A549 (cell line): ENCODE measurements at regions of chr6 and their contacts with region 1.

Region 1: GRCh38 chr6:47309291-47310130 is at the start of gene TNFRSF21:
- DNase-seq: peak; percentile 79 to 88
- ATAC-seq: peak; percentile 96 to 97
- H3K4me3 ChIP-seq: peak within 1 kb of the TSS; percentile 96
- H3K27ac ChIP-seq: peak within 1 kb of the TSS; percentile 90 to 93
- H3K4me1 ChIP-seq: peaks cover 29% of the 10 kb centered on the region
- CTCF ChIP-seq: peak; percentile 72
- EP300 ChIP-seq: 0 out of 5 replicates have a peak, but pooled peaks of 1 of the 2 experiments have one; percentile 7
- POLR2A ChIP-seq: peak; percentile 87
- RAD21 ChIP-seq: peak; percentile 90 to 95
- polyA plus RNA-seq, gene TNFRSF21: 14.1 and 15.2 TPM in 2 replicates

Region 2: DNA sequence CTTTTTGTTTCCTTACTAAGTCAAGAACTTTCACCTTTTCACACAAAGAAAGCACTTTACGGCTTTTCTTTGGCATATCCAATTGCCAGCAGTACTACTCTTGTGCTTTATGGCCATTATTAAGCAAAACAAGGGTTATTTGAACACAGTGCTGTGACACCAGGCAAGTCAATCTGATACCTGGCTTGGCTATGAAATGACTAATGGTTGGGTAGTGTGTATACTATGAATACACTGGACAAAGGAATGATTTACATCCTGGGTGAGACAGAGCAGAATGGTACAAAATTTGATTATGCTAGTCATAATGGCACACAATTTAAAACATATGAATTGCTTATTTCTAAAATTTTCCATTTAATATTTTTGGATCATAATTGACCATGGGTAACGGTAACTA is 245.2 kb before region 1 on chr6:
- CTCF ChIA-PET with region 1: no interaction called
- POLR2A ChIA-PET with region 1: no interaction called
- DNase-seq: no peak
- ATAC-seq: no peak
- H3K4me3 ChIP-seq: no peak overlapping the region
- H3K27ac ChIP-seq: no peak overlapping the region
- H3K4me1 ChIP-seq: no peaks in the 10 kb centered on the region
- CTCF ChIP-seq: no peak
- EP300 ChIP-seq: no peak
- POLR2A ChIP-seq: no peak
- RAD21 ChIP-seq: no peak

Region 3: GRCh38 chr6:47079638-47080037 is 229.9 kb before region 1 on chr6:
- CTCF ChIA-PET with region 1: interaction called, 10 read pairs
- POLR2A ChIA-PET with region 1: no interaction called
- DNase-seq: peak in 1 of 2 experiments; percentile 18
- ATAC-seq: 0 out of 6 replicates have a peak, but pooled peaks of 1 of the 2 experiments have one; percentile 31
- H3K4me3 ChIP-seq: no peak overlapping the region
- H3K27ac ChIP-seq: no peak overlapping the region
- H3K4me1 ChIP-seq: no peaks in the 10 kb centered on the region
- CTCF ChIP-seq: no peak
- EP300 ChIP-seq: no peak
- POLR2A ChIP-seq: no peak
- RAD21 ChIP-seq: peak in 1 of 2 experiments; percentile 33; a peak in 2 of 5 replicates

Region 4: DNA sequence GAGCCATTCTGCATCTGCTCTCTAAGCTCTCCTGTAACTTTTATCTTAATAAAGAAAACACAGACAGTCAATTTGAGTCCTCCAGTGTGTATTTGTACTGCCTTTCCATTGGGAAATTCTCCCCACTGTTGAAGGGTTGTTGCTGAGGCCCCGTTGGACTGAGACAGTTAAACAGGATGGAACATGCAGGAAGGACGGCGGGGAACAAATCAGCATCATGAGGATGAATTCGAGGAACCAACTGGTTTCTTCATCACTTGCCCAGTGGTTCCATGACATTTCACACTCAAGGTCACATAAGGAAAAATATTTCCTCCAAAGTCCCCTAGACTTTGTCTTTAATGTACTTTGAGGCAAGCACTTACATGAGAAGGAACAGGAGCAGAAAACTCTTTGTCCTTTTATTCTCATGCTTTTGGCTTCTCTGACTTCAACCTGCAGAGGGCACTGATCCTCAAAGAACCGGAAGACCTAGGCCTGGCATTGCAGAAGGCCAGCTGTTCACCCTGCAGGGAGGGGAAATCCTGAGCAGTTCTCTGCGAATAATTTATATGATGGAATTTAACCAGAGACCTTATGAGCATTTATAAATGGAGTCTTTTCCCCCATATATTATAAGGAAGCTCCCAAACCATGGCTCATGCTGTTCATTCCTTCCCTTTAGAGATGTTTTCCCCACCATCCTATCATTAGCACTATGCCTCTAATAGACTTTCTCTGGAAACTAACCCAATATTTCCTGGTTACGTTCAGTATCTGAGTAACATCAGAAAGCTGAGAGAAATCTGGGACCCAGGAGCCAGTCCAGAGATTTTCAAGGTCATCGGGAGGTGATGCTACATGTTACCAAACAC is 212.2 kb before region 1 on chr6:
- CTCF ChIA-PET with region 1: interaction called, 138 read pairs
- POLR2A ChIA-PET with region 1: no interaction called
- DNase-seq: peak; percentile 55 to 78
- ATAC-seq: peak; percentile 94 to 98
- H3K4me3 ChIP-seq: no peak overlapping the region
- H3K27ac ChIP-seq: peak overlapping the region; percentile 58 to 64
- H3K4me1 ChIP-seq: peaks cover 20% of the 10 kb centered on the region
- CTCF ChIP-seq: peak; percentile 77
- EP300 ChIP-seq: no peak
- POLR2A ChIP-seq: no peak
- RAD21 ChIP-seq: peak; percentile 95

Region 5: DNA sequence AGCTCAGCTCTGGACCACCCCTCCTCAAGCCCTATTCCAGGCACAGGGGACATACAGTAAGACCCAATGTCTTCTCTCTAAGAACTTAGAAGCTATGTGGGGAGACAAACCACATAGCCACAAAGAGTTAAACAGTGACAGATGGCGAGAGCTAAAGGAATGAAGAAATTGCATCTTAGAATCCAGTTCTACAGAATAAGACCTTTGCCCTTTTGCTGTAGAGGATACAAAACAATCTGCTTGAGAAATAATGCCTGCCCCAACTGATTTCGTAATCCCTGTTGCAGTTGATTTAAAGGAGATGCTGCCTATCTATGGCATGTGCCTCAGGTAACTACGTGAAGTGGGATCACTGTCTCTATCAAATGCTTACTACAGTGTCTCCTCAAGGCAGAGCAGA is 31.0 kb before region 1 on chr6:
- CTCF ChIA-PET with region 1: interaction called, 14 read pairs
- POLR2A ChIA-PET with region 1: no interaction called
- DNase-seq: peak in 1 of 2 experiments; percentile 23
- ATAC-seq: no peak; a peak in 1 of 6 replicates
- H3K4me3 ChIP-seq: no peak overlapping the region
- H3K27ac ChIP-seq: 0 out of 6 replicates have a peak overlapping the region, but pooled peaks of 1 of the 2 experiments have one; percentile 20
- H3K4me1 ChIP-seq: peaks cover 19% of the 10 kb centered on the region
- CTCF ChIP-seq: no peak
- EP300 ChIP-seq: no peak
- POLR2A ChIP-seq: no peak
- RAD21 ChIP-seq: no peak

Region 6: DNA sequence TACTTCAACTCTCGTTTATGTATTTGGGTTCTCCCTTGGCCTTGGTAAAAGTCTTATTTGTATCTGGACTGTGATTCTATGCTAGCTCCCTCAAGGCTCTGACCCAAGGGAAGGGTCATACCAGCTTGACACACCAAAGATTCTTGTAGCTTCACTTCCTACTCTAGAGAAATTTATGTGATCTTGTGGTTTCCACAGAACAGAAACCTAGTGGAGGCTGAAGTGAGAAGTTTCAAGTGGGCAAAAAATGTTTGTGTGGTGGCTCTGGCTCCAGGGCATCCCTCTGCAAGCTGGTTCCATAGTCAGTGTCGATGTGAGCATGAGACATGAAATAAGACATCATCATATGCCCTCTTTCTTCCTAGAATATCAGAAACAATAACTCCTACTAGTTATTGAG is 48.3 kb after region 1 on chr6:
- CTCF ChIA-PET with region 1: no interaction called
- POLR2A ChIA-PET with region 1: no interaction called
- DNase-seq: no peak
- ATAC-seq: no peak
- H3K4me3 ChIP-seq: no peak overlapping the region
- H3K27ac ChIP-seq: no peak overlapping the region
- H3K4me1 ChIP-seq: peaks cover 8% of the 10 kb centered on the region; the same call in 2 of the 3 replicates
- CTCF ChIP-seq: no peak
- EP300 ChIP-seq: no peak
- POLR2A ChIP-seq: no peak
- RAD21 ChIP-seq: no peak

Region 7: DNA sequence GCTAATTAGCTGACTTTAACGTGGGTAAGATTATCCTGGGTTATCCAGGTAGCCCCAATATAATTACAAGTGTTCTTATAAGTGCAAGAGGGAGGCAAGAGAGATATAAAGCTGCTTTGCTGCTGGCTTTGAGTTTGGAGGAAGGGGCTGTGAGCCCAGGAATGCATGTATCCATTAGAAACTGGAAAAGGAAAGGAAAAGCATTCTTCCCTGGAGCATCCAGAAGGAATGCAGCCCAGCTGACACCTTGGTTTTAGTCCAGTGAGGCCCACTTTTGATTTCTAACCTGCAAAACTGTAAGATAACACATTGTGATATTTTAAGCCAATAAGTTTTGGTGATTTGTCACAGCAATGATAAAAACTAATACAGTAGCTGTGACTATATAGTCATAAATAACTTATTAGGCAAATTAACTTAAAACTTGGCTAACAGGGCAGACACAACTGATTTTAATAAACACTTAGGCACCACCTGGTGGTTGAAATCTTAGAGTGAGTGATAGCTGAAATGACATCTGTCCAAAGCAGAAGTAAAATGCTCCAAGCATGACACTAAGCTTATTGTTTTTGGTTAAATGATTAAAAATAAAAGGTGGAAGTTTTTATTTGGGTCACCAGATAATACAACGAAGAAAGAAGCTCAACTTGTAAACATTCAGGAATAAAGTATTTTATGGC is 424.5 kb after region 1 on chr6:
- CTCF ChIA-PET with region 1: no interaction called
- POLR2A ChIA-PET with region 1: no interaction called
- DNase-seq: peak in 1 of 2 experiments; percentile 28
- ATAC-seq: peak in 1 of 2 experiments; percentile 50; a peak in 1 of 6 replicates
- H3K4me3 ChIP-seq: no peak overlapping the region
- H3K27ac ChIP-seq: no peak overlapping the region; a peak in 1 of 6 replicates
- H3K4me1 ChIP-seq: peaks cover 4% of the 10 kb centered on the region; the same call in 1 of the 3 replicates
- CTCF ChIP-seq: peak; percentile 56
- EP300 ChIP-seq: no peak
- POLR2A ChIP-seq: no peak
- RAD21 ChIP-seq: peak; percentile 60 to 73